ENCODE measurements at regions of chr11 and their contacts with region 1.

Region 1: DNA sequence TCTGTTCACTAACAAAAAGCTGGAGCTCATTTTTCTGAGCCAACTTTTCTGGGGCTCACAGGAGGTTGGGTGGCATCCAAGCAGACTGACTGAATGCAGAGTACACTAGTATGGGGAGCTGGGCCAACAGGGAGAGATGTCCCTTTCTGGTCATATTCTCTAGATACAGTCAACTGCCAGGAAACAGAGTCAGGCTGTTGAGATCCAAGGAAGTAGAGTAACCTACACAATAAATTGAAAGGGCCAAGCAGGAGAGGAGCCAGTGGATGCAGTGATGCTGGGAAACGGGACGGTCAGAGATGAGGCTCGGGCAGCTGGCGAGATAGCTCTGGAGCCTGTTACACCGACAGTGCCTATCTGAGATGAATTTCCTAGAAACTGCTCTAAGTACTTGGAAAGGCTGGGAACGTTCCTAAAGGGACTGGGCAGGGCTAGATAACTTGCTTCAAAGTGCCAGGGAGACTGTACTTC is 71.1 kb downstream of the LARGE2 start:
- DNase-seq: no peak
- ATAC-seq: no peak
- H3K4me3 Mint-ChIP-seq: no peak overlapping the region
- H3K27ac Mint-ChIP-seq: no peak overlapping the region
- H3K4me1 Mint-ChIP-seq: peaks cover 22% of the 10 kb centered on the region
- H3K27me3 Mint-ChIP-seq: no peaks in the 10 kb centered on the region
- CTCF ChIP-seq: no peak

Region 2: DNA sequence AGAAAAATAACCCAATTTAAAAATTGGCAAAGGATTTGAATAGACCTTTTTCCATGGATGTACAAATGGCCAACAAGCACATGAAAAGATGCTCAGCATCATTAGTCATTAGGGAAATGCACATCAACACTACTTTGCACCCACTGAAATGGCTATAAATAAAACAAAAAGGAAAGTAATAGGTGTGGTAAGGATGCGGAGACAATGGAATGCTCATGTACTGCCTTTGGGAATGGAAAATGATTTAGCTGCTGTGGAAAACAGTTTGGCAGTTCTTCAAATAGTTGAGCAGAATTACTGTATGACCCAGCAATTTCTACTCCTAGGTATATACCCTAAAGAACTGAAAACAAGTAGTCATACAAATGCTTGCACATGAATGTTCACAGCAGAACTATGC is 33.7 kb before region 1 on chr11:
- CTCF ChIA-PET with region 1: no interaction called
- POLR2A ChIA-PET with region 1: no interaction called
- intact Hi-C with region 1: loop called (anchors 5 kb)
- DNase-seq: no peak
- ATAC-seq: no peak
- H3K4me3 Mint-ChIP-seq: no peak overlapping the region
- H3K27ac Mint-ChIP-seq: no peak overlapping the region
- H3K4me1 Mint-ChIP-seq: no peaks in the 10 kb centered on the region
- H3K27me3 Mint-ChIP-seq: no peaks in the 10 kb centered on the region
- CTCF ChIP-seq: no peak

Measured in activated B cell treated with CpG ODN at 0.5 μM for 24 hours (primary cell).